Activated CD4-positive, alpha-beta T cell treated with anti-CD3 and anti-CD28 coated beads, Interleukin-2, amount 10 ng/mL, durations not matched to agents 24 days and 14 days (primary cell): ENCODE measurements at regions of chr11 and their contacts with region 1.

Region 1: DNA sequence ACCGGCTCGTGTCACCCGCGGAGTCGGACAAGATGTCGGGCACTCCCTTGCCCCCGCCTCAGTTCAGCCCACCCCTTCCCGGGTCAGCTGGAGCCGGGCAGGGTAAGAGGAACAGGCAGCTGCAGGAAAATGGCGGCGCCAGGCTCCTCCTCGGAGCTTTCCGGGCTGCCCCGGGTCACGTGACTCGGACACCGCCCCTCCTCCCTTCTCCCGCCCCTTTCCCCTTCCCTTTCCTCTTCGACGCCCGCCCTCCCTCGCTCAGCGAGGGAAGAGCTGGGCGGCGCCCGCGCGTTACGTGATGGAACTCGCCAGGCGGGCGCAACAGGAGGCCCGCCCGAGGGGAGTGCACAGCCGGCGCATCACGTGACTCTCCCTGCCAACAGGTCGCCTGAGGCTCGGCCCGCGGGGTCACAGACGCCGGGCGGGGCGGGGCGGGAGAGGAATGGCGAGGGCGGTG is at the start of gene PICALM:
- DNase-seq: peak; percentile 99
- H3K4me3 Mint-ChIP-seq: peak within 1 kb of the TSS; percentile 100
- H3K27ac Mint-ChIP-seq: peak within 1 kb of the TSS; percentile 97
- H3K4me1 Mint-ChIP-seq: peaks cover 33% of the 10 kb centered on the region
- H3K27me3 Mint-ChIP-seq: no peaks in the 10 kb centered on the region
- total RNA-seq, gene PICALM: 141 and 156 TPM in 2 replicates

Region 2: DNA sequence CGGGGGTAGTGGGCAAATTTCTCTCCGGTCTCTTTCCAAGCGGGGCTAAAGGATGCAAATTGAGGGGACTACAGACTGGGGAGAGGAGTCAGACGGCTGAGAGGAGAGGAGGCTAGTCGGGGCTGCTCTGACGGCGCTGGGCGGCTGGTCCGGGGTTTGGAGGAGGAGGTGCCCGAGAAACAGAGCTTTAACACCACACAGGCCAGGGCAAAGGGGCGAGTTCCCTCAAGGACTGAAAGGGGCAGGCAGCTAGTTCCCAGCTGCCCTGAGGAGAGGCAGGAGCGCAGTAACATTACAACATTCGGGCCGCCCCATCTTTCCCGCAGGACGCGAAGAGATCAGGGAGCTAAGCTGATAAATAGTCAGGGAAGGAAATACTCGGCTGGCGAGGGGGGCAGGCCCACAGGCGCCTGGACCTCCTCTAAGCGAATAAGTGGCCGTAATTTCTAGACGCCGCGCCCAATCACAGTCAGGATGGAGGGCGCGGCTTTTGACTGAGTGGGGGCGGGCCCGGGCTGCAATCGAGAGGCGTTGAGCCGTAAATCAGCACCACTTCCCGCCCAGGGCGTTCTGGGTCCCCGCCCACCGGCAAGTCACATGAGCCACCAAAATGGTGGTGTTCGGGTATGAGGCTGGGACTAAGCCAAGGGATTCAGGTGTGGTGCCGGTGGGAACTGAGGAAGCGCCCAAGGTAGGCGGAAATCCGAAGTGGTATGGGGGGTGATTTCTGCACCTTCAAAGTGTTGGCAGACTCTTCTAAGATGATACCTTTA is 440.8 kb before region 1 on chr11 and contains the start of gene TMEM126B:
- intact Hi-C with region 1: loop called (anchors 1 kb)
- DNase-seq: peak; percentile 99
- H3K4me3 Mint-ChIP-seq: peak within 1 kb of the TSS; percentile 96
- H3K27ac Mint-ChIP-seq: peak within 1 kb of the TSS; percentile 95
- H3K4me1 Mint-ChIP-seq: peaks cover 43% of the 10 kb centered on the region
- H3K27me3 Mint-ChIP-seq: peaks cover 2% of the 10 kb centered on the region
- total RNA-seq, gene TMEM126B: 52.2 and 54.4 TPM in 2 replicates

Region 3: GRCh38 chr11:85759915-85760314 is 309.1 kb before region 1 on chr11:
- intact Hi-C with region 1: loop called (anchors 10 kb)
- DNase-seq: no peak
- H3K4me3 Mint-ChIP-seq: no peak overlapping the region
- H3K27ac Mint-ChIP-seq: no peak overlapping the region
- H3K4me1 Mint-ChIP-seq: peaks cover 69% of the 10 kb centered on the region
- H3K27me3 Mint-ChIP-seq: no peaks in the 10 kb centered on the region

Region 4: DNA sequence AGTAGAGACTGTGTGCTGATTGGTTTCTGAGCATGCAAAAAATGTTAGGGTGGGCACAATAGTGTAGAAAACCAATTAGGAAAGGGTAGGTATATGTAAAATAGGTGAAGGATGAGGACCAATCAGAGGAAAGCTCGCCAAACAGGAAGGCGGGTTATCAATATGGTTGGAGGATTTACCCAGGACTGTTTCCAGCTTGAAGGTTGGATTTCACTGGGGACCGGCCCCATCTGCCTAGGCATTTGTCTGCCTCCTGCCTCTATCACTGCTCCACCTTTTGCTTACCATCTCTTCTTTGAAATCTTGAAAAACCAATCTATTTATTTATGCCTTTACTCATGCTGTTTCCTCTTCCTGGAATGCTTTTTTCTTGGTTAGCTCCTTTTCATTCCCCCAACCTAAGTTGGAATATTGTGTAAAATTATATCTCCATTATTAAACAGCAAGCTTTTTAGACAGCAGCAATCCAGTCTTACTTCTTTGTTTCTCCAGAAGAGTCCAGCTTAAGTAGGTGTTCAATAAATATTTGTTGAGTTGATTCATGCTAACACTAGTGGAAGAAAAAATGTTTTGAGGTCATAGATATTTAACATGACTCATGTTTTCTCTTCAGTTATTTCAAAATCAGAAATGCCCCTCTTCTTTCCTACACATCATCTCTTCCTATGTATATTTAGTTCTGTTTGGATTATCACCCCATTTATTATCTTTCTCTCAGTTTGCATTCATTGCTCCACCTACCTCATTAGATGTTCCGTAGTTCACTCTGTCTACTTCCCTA is 193.6 kb before region 1 on chr11:
- intact Hi-C with region 1: no loop called
- DNase-seq: peak; percentile 8
- H3K4me3 Mint-ChIP-seq: no peak overlapping the region
- H3K27ac Mint-ChIP-seq: peak overlapping the region; percentile 1
- H3K4me1 Mint-ChIP-seq: peaks cover 12% of the 10 kb centered on the region
- H3K27me3 Mint-ChIP-seq: peaks cover 9% of the 10 kb centered on the region

Region 5: DNA sequence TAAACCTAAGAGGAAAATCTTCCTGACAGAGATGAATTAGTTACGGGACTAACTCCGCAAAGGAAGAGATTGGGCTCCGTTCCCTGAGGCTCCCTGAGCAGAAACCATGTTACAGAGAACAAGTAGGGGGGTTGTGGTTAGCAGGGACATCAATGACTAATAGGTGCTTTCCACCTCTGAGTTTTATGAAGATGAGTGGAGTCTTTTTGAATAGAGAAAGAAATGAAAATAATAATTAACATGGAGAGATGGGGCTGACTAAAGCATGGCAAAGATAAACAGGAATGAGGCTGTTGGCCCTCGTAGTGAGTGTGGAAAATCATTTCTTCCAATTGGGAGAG is 47.4 kb after region 1 on chr11:
- intact Hi-C with region 1: loop called (anchors 1 kb)
- DNase-seq: peak; percentile 70
- H3K4me3 Mint-ChIP-seq: peak overlapping the region; percentile 24
- H3K27ac Mint-ChIP-seq: peak overlapping the region; percentile 69
- H3K4me1 Mint-ChIP-seq: peaks cover 30% of the 10 kb centered on the region
- H3K27me3 Mint-ChIP-seq: peaks cover 2% of the 10 kb centered on the region

Region 6: GRCh38 chr11:86176165-86176884 is 107.3 kb after region 1 on chr11:
- intact Hi-C with region 1: loop called (anchors 2 kb)
- DNase-seq: peak; percentile 85
- H3K4me3 Mint-ChIP-seq: peak overlapping the region; percentile 10
- H3K27ac Mint-ChIP-seq: peak overlapping the region; percentile 82
- H3K4me1 Mint-ChIP-seq: peaks cover 27% of the 10 kb centered on the region
- H3K27me3 Mint-ChIP-seq: no peaks in the 10 kb centered on the region

Region 7: DNA sequence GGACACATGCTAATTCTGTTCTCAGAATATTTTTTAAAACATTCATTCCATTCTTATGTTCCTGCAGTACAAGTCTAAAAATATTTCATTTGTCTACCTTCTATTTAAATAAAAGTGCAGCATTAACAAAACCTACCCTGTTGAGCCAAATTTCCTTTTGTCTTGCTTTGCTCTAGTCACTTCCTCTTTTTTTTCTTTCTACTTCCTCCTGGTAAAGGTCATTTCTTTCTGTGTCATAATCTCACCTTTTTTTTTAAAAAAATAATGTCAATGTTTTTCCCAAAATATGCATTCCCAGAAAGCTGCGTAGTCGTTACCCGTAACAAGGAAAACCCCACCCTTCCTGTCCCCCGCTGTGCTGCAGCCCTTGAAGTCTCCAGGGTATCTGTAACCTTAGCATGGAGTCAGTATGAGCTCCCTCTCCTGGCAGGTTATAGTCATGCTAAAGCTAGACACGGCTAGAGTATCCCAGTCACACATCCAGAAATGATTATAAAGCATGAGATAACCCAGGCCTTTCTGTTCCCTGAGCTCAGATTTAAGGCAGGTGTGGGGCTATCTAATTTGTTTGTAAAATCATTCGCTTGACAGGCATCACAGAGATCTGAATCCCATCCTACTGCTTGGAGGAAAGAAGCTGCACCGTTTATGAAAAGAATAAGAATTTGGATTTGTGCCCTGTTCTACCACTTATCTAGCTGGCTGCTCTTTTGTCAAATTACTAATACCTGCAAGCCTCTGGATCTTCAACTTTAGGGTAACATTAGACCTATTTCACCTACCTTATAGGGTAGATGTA is 124.5 kb after region 1 on chr11:
- intact Hi-C with region 1: loop called (anchors 1 kb)
- DNase-seq: peak; percentile 89
- H3K4me3 Mint-ChIP-seq: peak overlapping the region; percentile 70
- H3K27ac Mint-ChIP-seq: peak overlapping the region; percentile 73
- H3K4me1 Mint-ChIP-seq: peaks cover 30% of the 10 kb centered on the region
- H3K27me3 Mint-ChIP-seq: no peaks in the 10 kb centered on the region